ENCODE measurements at regions of chr1 and their contacts with region 1.

Region 1: GRCh38 chr1:244796718-244797406 is 38.6 kb upstream of the COX20 start:
- DNase-seq: peak; percentile 58

Region 2: DNA sequence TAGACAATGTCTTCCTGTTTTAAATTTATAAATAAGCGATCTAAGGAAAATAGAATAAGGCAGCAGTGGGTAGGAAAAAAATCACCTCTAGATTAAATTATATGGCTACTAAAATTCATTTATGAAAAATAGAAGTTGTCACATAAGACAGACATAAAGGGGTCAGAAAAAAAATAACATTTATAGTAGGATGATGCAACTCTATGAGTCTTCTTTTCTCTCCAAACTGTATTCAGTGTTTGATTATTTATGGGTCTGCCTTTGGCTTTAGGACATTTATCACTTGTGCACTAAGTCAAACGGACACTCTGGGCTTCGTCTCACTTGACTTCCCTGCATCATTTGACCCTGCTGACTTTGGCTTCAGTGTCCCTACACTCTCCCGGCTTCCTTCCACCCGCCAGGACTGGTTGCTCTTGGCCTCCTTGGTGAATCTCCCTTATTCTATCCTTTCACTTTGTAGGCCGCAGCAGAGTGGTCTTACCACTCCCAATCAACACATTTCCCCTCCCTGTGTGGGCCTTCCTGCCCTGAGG is 191.0 kb before region 1 on chr1:
- intact Hi-C with region 1: loop called (anchors 5 kb)
- DNase-seq: no peak